Ascending aorta (tissue), 2 donors: ENCODE measurements at regions of chr11 and their contacts with region 1.

Region 1: GRCh38 chr11:116895048-116895757 is 57.8 kb upstream of the APOA1 start:
- DNase-seq: no peak
- H3K4me3 ChIP-seq: no peak overlapping the region
- H3K27ac ChIP-seq: no peak overlapping the region
- H3K4me1 ChIP-seq: no peaks in the 10 kb centered on the region
- H3K27me3 ChIP-seq: no peaks in the 10 kb centered on the region
- CTCF ChIP-seq: peak in 2 of 3 experiments; percentile 32 to 37

Region 2: GRCh38 chr11:116925050-116925449 is 29.8 kb after region 1 on chr11:
- intact Hi-C with region 1: no loop called
- DNase-seq: no peak
- H3K4me3 ChIP-seq: no peak overlapping the region
- H3K27ac ChIP-seq: no peak overlapping the region
- H3K4me1 ChIP-seq: peaks cover 0 to 6% of the 10 kb centered on the region in 2 donors
- H3K27me3 ChIP-seq: no peaks in the 10 kb centered on the region
- CTCF ChIP-seq: no peak

Region 3: DNA sequence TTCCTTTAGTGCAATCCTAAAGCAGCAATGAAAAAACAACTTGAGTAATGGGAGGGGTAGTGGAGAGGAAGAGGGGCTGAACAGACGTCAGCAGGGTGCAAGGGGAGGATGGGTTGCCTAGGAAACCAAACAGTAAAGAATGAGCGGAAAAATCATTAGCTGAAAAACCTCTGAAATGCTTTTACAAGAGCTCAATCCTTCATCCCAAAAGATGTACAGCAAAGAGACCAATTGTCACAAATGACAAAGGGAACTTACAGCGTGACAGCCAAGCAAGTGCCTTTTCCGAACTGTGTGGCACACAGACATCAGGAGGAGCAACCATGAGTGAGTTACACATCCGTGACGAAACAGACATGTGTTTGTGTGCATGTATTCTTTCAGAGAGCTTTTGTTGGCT is 98.4 kb after region 1 on chr11:
- intact Hi-C with region 1: no loop called
- DNase-seq: no peak
- H3K4me3 ChIP-seq: no peak overlapping the region
- H3K27ac ChIP-seq: no peak overlapping the region
- H3K4me1 ChIP-seq: peaks cover 0 to 9% of the 10 kb centered on the region in 2 donors
- H3K27me3 ChIP-seq: no peaks in the 10 kb centered on the region
- CTCF ChIP-seq: no peak

Region 4: DNA sequence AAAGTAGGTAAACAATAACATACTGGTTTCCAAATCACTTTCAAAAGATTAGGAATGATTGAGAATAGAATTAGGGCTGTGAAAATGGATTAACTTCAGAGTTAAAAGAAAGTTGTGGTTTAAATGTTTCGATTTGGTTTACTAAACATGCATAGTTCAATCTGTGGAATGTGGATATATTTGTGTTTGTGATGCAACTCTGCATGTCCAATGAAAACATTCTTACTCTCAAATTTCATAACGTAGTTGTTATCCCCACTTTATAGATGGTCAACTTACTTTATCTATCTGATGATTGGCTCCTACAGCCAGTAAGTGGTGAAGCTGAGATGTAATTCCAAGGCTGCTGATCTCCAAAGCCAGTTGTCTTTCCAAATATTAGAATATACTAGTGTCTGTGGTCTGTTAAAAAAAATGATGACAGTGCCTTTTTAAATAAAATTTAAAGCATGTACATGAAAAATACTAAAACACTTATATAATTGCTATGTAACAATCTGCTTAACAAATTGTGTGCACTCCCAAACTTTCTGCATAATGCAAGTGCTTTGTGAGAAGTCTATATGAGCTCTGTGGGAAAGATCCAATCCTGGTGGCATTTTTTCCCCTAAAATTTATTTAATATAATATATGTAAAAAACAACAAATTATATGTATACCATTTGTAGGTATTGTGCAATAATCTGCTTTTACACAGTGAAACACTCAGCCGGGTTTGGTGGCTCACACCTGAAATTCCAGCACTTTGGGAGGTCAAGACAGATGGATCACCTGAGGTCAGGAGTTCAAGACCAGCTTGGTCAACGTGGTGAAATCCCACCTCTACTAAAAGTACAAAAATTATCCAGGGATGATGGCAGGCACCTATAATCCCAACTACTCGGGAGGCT is 212.7 kb after region 1 on chr11:
- intact Hi-C with region 1: loop called (anchors 1 kb)
- DNase-seq: no peak
- H3K4me3 ChIP-seq: no peak overlapping the region
- H3K27ac ChIP-seq: no peak overlapping the region
- H3K4me1 ChIP-seq: no peaks in the 10 kb centered on the region
- H3K27me3 ChIP-seq: no peaks in the 10 kb centered on the region
- CTCF ChIP-seq: no peak

Region 5: GRCh38 chr11:117410861-117411710 is 515.9 kb after region 1 on chr11:
- intact Hi-C with region 1: no loop called
- DNase-seq: no peak
- H3K4me3 ChIP-seq: no peak overlapping the region
- H3K27ac ChIP-seq: no peak overlapping the region
- H3K4me1 ChIP-seq: no peaks in the 10 kb centered on the region
- H3K27me3 ChIP-seq: no peaks in the 10 kb centered on the region
- CTCF ChIP-seq: no peak